Transverse colon (tissue), 4 donors: ENCODE measurements at regions of chr1 and their contacts with region 1.

Region 1: GRCh38 chr1:233863901-233864545 is 40.5 kb upstream of the SLC35F3 start:
- DNase-seq: no peak
- H3K4me3 ChIP-seq: no peak overlapping the region
- H3K27ac ChIP-seq: no peak overlapping the region
- H3K4me1 ChIP-seq: no peaks in the 10 kb centered on the region
- H3K27me3 ChIP-seq: no peaks in the 10 kb centered on the region
- CTCF ChIP-seq: no peak
- EP300 ChIP-seq: no peak
- POLR2A ChIP-seq: no peak

Region 2: GRCh38 chr1:233790662-233791375 is 73.2 kb before region 1 on chr1:
- in situ Hi-C with region 1: no loop called
- intact Hi-C with region 1: no loop called
- DNase-seq: peak; percentile 11
- H3K4me3 ChIP-seq: no peak overlapping the region
- H3K27ac ChIP-seq: no peak overlapping the region
- H3K4me1 ChIP-seq: no peaks in the 10 kb centered on the region
- H3K27me3 ChIP-seq: peaks cover 6% of the 10 kb centered on the region
- CTCF ChIP-seq: peak; percentile 79 to 90 (median 84)
- EP300 ChIP-seq: no peak
- POLR2A ChIP-seq: no peak

Region 3: DNA sequence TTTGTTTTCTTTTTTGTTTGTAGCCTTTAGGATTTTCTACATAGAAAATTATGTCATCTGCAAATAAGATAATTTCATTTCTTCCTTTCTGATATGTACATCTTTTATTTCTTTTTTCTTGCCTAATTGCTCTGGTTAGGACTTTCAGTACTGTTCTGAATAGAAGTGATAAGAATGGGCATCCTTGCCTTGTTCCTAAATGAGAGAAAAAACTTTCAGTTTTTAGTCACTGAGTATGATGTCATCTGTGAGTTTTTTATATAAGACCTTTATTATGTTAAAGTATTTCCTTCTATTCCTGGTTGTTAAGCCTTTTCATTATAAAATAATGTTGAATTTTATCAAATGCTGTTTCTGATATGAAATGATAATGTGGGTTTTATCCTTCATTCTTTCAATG is 35.5 kb before region 1 on chr1:
- in situ Hi-C with region 1: no loop called
- intact Hi-C with region 1: loop called (anchors 1 kb)
- DNase-seq: no peak
- H3K4me3 ChIP-seq: no peak overlapping the region
- H3K27ac ChIP-seq: no peak overlapping the region
- H3K4me1 ChIP-seq: no peaks in the 10 kb centered on the region
- H3K27me3 ChIP-seq: no peaks in the 10 kb centered on the region
- CTCF ChIP-seq: no peak
- EP300 ChIP-seq: no peak
- POLR2A ChIP-seq: no peak

Region 4: GRCh38 chr1:234176000-234176399 is 312.0 kb after region 1 on chr1:
- in situ Hi-C with region 1: no loop called
- intact Hi-C with region 1: no loop called
- DNase-seq: no peak
- H3K4me3 ChIP-seq: no peak overlapping the region
- H3K27ac ChIP-seq: no peak overlapping the region
- H3K4me1 ChIP-seq: no peaks in the 10 kb centered on the region
- H3K27me3 ChIP-seq: peaks cover 3% of the 10 kb centered on the region
- CTCF ChIP-seq: no peak
- EP300 ChIP-seq: no peak
- POLR2A ChIP-seq: no peak